ENCODE measurements at regions of chr11 and their contacts with region 1.

Region 1: GRCh38 chr11:113773416-113774173 is at the start of gene ZW10:
- DNase-seq: peak; percentile 96 to 99 (median 97)
- H3K4me3 ChIP-seq: peak within 1 kb of the TSS; percentile 83
- H3K27ac ChIP-seq: peak within 1 kb of the TSS in 1 of 2 donors; percentile 62
- H3K4me1 ChIP-seq: peaks cover 6% of the 10 kb centered on the region
- H3K27me3 ChIP-seq: no peaks in the 10 kb centered on the region
- CTCF ChIP-seq: peak; percentile 78 to 81 (median 80)
- EP300 ChIP-seq: no peak
- POLR2A ChIP-seq: no peak
- total RNA-seq, gene ZW10: 8.9 to 12.6 (median 11.7) TPM

Region 2: GRCh38 chr11:113314389-113315301 is 458.9 kb before region 1 on chr11 and contains the start of gene TTC12:
- intact Hi-C with region 1: loop called in 2 of 4 experiments (anchors 5 to 10 kb)
- DNase-seq: peak; percentile 94 to 98 (median 96)
- H3K4me3 ChIP-seq: peak within 1 kb of the TSS; percentile 67
- H3K27ac ChIP-seq: peak within 1 kb of the TSS; percentile 1 to 93
- H3K4me1 ChIP-seq: peaks cover 4% of the 10 kb centered on the region
- H3K27me3 ChIP-seq: no peaks in the 10 kb centered on the region
- CTCF ChIP-seq: no peak
- EP300 ChIP-seq: no peak
- POLR2A ChIP-seq: peak; percentile 60
- total RNA-seq, gene TTC12: 13.4 to 32.5 (median 28.1) TPM

Region 3: GRCh38 chr11:113334183-113334582 is 439.4 kb before region 1 on chr11:
- intact Hi-C with region 1: no loop called
- DNase-seq: no peak
- H3K4me3 ChIP-seq: no peak overlapping the region
- H3K27ac ChIP-seq: no peak overlapping the region
- H3K4me1 ChIP-seq: no peaks in the 10 kb centered on the region
- H3K27me3 ChIP-seq: no peaks in the 10 kb centered on the region
- CTCF ChIP-seq: no peak
- EP300 ChIP-seq: no peak
- POLR2A ChIP-seq: no peak

Region 4: GRCh38 chr11:113587308-113587739 is 186.3 kb before region 1 on chr11:
- intact Hi-C with region 1: no loop called
- DNase-seq: no peak
- H3K4me3 ChIP-seq: no peak overlapping the region
- H3K27ac ChIP-seq: no peak overlapping the region
- H3K4me1 ChIP-seq: no peaks in the 10 kb centered on the region
- H3K27me3 ChIP-seq: no peaks in the 10 kb centered on the region
- CTCF ChIP-seq: no peak
- EP300 ChIP-seq: no peak
- POLR2A ChIP-seq: no peak